ENCODE measurements at regions of chr1 and their contacts with region 1.

Region 1: GRCh38 chr1:91885716-91886506 is at the start of gene TGFBR3:
- DNase-seq: peak; percentile 62
- H3K4me3 ChIP-seq: peak within 1 kb of the TSS; percentile 63 to 66 (median 64)
- H3K27ac ChIP-seq: no peak within 1 kb of the TSS
- H3K4me1 ChIP-seq: peaks cover 24% of the 10 kb centered on the region
- H3K27me3 ChIP-seq: peaks cover 24% of the 10 kb centered on the region
- CTCF ChIP-seq: peak; percentile 18 to 64
- total RNA-seq, gene TGFBR3: 0.61 to 0.67 TPM

Region 2: GRCh38 chr1:91609571-91609970 is 276.3 kb before region 1 on chr1:
- CTCF ChIA-PET with region 1: no interaction called
- dilution Hi-C with region 1: no loop called
- in situ Hi-C with region 1: no loop called
- intact Hi-C with region 1: loop called (anchors 1 kb)
- DNase-seq: peak; percentile 68
- H3K4me3 ChIP-seq: no peak overlapping the region
- H3K27ac ChIP-seq: peak overlapping the region; percentile 43
- H3K4me1 ChIP-seq: peaks cover 12% of the 10 kb centered on the region
- H3K27me3 ChIP-seq: no peaks in the 10 kb centered on the region
- CTCF ChIP-seq: no peak

Region 3: DNA sequence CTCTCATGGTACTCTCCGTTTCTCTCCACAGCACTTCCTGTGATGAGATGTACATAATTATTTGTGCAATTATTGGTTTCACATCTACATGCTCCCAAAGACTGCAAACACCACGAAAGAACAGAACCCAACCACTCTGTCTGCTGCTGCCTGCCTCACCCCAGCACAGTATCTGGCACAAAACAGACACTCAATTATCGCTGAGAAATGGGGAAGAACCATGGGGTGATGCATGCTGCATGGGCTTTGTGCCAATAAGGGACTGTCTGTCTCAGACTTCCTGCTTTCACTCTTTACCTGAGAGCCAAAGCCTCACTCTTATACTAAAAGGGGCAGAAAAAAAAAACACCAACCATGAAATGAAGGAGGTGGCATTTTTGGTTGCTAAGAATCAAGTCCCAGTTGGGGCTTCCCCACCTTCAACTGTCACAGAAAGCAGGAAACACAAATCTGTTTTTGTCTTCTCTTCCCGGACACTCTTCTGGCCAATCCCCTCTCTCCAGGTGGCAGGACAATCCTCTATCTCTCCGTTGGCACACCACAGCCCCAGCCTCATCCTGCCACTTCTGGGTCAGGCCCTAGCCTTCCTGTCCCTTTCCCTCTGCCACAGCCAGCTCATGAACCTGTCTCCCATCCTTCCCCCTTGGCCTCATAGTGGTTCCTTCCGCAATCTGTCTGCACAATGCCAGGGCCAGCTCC is 81.9 kb before region 1 on chr1:
- CTCF ChIA-PET with region 1: no interaction called
- dilution Hi-C with region 1: no loop called
- in situ Hi-C with region 1: no loop called
- intact Hi-C with region 1: loop called (anchors 10 kb)
- DNase-seq: peak; percentile 46
- H3K4me3 ChIP-seq: no peak overlapping the region
- H3K27ac ChIP-seq: no peak overlapping the region
- H3K4me1 ChIP-seq: peaks cover 9% of the 10 kb centered on the region
- H3K27me3 ChIP-seq: peaks cover 40% of the 10 kb centered on the region
- CTCF ChIP-seq: no peak

Region 4: GRCh38 chr1:91929250-91929649 is 43.3 kb after region 1 on chr1:
- CTCF ChIA-PET with region 1: no interaction called
- dilution Hi-C with region 1: no loop called
- in situ Hi-C with region 1: no loop called
- intact Hi-C with region 1: loop called (anchors 5 kb)
- DNase-seq: no peak
- H3K4me3 ChIP-seq: no peak overlapping the region
- H3K27ac ChIP-seq: no peak overlapping the region
- H3K4me1 ChIP-seq: no peaks in the 10 kb centered on the region
- H3K27me3 ChIP-seq: no peaks in the 10 kb centered on the region
- CTCF ChIP-seq: no peak